PC-3 (cell line): ENCODE measurements at regions of chr4 and their contacts with region 1.

Region 1: GRCh38 chr4:67909905-67910584 is 26.2 kb upstream of the TMPRSS11D start:
- DNase-seq: peak; percentile 70
- ATAC-seq: peak; percentile 53
- H3K4me3 ChIP-seq: no peak overlapping the region
- H3K27ac ChIP-seq: no peak overlapping the region
- H3K4me1 ChIP-seq: no peaks in the 10 kb centered on the region
- H3K27me3 ChIP-seq: no peaks in the 10 kb centered on the region
- CTCF ChIP-seq: peak; percentile 84

Region 2: DNA sequence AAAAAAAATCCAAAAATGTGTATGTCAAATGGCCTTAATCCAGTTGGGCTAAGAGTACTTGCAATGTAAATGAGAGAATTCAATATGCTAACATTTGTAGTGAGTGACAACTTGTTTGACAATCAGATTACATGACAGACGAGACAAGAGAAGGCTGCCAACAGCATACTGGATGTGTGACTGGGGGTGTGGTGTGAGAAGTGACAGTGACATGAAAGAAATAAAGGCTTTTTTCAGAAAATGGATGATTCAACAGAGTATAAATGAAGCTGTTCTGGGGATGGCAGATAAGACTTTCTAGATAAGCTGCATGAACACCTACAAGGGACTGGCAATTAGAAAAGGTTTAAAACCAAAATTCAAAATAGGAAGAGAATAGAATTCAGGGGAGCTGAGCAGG is 508.1 kb before region 1 on chr4:
- CTCF ChIA-PET with region 1: no interaction called
- POLR2A ChIA-PET with region 1: no interaction called
- intact Hi-C with region 1: no loop called
- DNase-seq: no peak
- ATAC-seq: no peak
- H3K4me3 ChIP-seq: no peak overlapping the region
- H3K27ac ChIP-seq: no peak overlapping the region
- H3K4me1 ChIP-seq: no peaks in the 10 kb centered on the region
- H3K27me3 ChIP-seq: no peaks in the 10 kb centered on the region
- CTCF ChIP-seq: no peak

Region 3: GRCh38 chr4:67746797-67747495 is 163.1 kb before region 1 on chr4:
- CTCF ChIA-PET with region 1: interaction called, 3 read pairs
- POLR2A ChIA-PET with region 1: no interaction called
- intact Hi-C with region 1: loop called (anchors 2 kb)
- DNase-seq: peak; percentile 78
- ATAC-seq: no peak; the same call in 1 of the 2 replicates
- H3K4me3 ChIP-seq: no peak overlapping the region
- H3K27ac ChIP-seq: no peak overlapping the region
- H3K4me1 ChIP-seq: peaks cover 11% of the 10 kb centered on the region
- H3K27me3 ChIP-seq: no peaks in the 10 kb centered on the region
- CTCF ChIP-seq: peak; percentile 81

Region 4: GRCh38 chr4:67892905-67893304 is 17.1 kb before region 1 on chr4:
- CTCF ChIA-PET with region 1: no interaction called
- POLR2A ChIA-PET with region 1: no interaction called
- intact Hi-C with region 1: loop called (anchors 1 kb)
- DNase-seq: no peak
- ATAC-seq: peak; percentile 65
- H3K4me3 ChIP-seq: no peak overlapping the region
- H3K27ac ChIP-seq: no peak overlapping the region
- H3K4me1 ChIP-seq: no peaks in the 10 kb centered on the region
- H3K27me3 ChIP-seq: no peaks in the 10 kb centered on the region
- CTCF ChIP-seq: peak; percentile 43

Region 5: GRCh38 chr4:67934628-67935027 is 24.6 kb after region 1 on chr4:
- CTCF ChIA-PET with region 1: no interaction called
- POLR2A ChIA-PET with region 1: no interaction called
- intact Hi-C with region 1: no loop called
- DNase-seq: no peak
- ATAC-seq: no peak
- H3K4me3 ChIP-seq: no peak overlapping the region
- H3K27ac ChIP-seq: no peak overlapping the region
- H3K4me1 ChIP-seq: peaks cover 6% of the 10 kb centered on the region
- H3K27me3 ChIP-seq: 0 out of 2 replicates have a peak, but pooled peaks cover 4% of the 10 kb centered on the region
- CTCF ChIP-seq: no peak

Region 6: GRCh38 chr4:68011684-68012083 is 101.6 kb after region 1 on chr4:
- CTCF ChIA-PET with region 1: no interaction called
- POLR2A ChIA-PET with region 1: no interaction called
- intact Hi-C with region 1: no loop called
- DNase-seq: no peak
- ATAC-seq: no peak
- H3K4me3 ChIP-seq: no peak overlapping the region
- H3K27ac ChIP-seq: no peak overlapping the region
- H3K4me1 ChIP-seq: no peaks in the 10 kb centered on the region
- H3K27me3 ChIP-seq: peaks cover 37% of the 10 kb centered on the region
- CTCF ChIP-seq: no peak

Region 7: DNA sequence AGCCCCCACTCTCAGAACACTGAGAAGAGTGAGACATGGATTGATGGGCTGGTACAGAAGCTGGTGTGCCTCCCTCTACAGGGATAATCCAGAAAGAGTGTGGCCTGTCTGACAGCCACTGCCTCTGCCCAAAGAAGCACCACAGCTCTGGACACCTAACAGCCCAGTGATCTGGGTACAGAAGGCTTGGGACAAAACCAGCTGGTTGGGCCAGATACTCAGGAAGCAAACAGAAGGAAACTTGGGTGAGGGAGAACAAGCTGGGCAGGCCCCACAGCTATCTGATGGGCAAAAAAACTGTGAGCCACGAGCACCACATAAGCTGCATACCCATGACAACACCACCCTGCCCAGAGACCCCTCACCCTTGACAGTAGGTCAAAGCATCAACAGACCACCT is 172.7 kb after region 1 on chr4:
- CTCF ChIA-PET with region 1: no interaction called
- POLR2A ChIA-PET with region 1: no interaction called
- intact Hi-C with region 1: no loop called
- DNase-seq: no peak
- ATAC-seq: no peak
- H3K4me3 ChIP-seq: no peak overlapping the region
- H3K27ac ChIP-seq: no peak overlapping the region
- H3K4me1 ChIP-seq: no peaks in the 10 kb centered on the region
- H3K27me3 ChIP-seq: peaks cover 14% of the 10 kb centered on the region; the same call in 1 of the 2 replicates
- CTCF ChIP-seq: no peak